Kidney (tissue), 22 donors: ENCODE measurements at regions of chr1 and their contacts with region 1.

Region 1: GRCh38 chr1:183915625-183916510 is 110.9 kb downstream of the RGL1 start:
- DNase-seq: peak; percentile 72 to 95 (median 76)
- H3K4me3 ChIP-seq: no peak overlapping the region
- H3K27ac ChIP-seq: no peak overlapping the region
- H3K4me1 ChIP-seq: no peaks in the 10 kb centered on the region
- H3K27me3 ChIP-seq: no peaks in the 10 kb centered on the region
- CTCF ChIP-seq: peak; percentile 88

Region 2: GRCh38 chr1:183655562-183656075 is 260.2 kb before region 1 on chr1:
- intact Hi-C with region 1: loop called (anchors 5 kb)
- DNase-seq: peak; percentile 82 to 94 (median 85)
- H3K4me3 ChIP-seq: no peak overlapping the region
- H3K27ac ChIP-seq: no peak overlapping the region
- H3K4me1 ChIP-seq: no peaks in the 10 kb centered on the region
- H3K27me3 ChIP-seq: no peaks in the 10 kb centered on the region
- CTCF ChIP-seq: peak; percentile 91

Region 3: DNA sequence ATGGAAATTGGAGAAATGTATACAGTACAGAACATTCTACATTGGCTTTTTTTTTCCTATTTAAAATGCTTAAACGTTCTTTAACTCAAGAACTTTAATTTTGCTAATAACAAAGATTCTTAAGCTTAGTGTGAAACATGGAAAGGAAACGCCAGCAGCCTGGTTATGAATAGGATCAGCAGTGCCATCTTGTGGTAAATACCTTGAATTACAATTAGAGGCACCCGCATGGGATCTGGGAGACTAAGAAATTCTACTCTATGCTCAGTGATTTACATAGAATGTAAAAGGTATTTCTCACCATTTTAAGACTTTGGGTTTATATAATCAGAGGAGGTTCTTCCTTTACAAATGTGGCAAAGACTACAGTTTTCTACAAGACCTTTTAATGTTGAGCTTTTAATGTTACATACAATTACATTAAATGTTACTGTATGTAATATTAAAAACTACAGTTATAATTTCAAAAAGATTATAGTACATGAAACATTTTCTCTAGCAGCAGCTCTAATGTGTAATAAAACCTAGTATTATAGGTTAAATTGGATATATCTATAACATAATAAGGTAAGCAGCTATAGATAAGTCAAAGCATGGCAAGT is 230.7 kb before region 1 on chr1:
- intact Hi-C with region 1: loop called (anchors 10 kb)
- DNase-seq: peak in 2 of 5 donors; percentile 11 to 19
- H3K4me3 ChIP-seq: no peak overlapping the region
- H3K27ac ChIP-seq: no peak overlapping the region
- H3K4me1 ChIP-seq: no peaks in the 10 kb centered on the region
- H3K27me3 ChIP-seq: no peaks in the 10 kb centered on the region
- CTCF ChIP-seq: peak; percentile 64

Region 4: DNA sequence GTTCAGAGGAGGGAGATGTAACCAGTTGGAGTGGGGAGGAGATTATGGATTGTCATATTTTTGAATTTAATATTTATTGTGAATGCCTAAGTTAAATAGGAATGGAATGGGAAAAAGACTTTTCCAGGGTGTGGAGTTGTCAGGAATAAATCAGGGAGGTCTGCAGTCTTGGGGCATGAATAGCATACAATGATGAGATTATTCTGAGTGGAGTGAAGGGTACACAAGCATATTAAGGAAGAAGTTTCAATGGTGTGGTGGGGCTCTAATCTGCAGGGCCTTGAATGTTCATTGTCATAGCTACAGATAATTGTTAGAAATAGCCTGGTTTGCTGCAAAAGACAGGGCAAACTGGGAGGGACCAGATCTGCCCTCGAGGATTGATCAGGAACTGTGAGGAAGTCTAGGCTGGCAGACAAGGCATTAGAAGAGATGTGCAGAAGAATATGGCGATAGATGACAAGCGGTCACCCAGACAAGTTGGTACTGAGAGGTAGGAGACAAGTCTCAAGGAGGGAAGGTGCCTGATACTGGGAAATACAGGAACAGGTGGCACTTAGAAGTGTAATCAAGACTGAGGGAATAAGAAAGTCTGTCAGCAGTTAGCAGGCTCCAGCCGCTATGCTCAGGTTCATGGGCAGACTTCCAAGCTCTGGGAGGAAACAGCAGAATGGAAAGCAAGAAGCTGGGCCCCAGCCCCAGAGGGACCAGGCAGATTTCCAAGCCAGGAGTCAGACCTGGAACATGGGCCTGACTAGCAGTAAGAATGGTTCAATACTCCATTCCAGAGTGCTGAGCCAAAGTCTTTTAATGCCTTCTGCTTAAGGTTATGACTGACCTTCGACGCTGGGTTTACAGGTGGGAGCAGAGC is 131.9 kb before region 1 on chr1:
- intact Hi-C with region 1: no loop called
- DNase-seq: peak in 3 of 5 donors; percentile 41 to 84 (median 67)
- H3K4me3 ChIP-seq: no peak overlapping the region
- H3K27ac ChIP-seq: no peak overlapping the region
- H3K4me1 ChIP-seq: no peaks in the 10 kb centered on the region
- H3K27me3 ChIP-seq: no peaks in the 10 kb centered on the region
- CTCF ChIP-seq: no peak

Region 5: DNA sequence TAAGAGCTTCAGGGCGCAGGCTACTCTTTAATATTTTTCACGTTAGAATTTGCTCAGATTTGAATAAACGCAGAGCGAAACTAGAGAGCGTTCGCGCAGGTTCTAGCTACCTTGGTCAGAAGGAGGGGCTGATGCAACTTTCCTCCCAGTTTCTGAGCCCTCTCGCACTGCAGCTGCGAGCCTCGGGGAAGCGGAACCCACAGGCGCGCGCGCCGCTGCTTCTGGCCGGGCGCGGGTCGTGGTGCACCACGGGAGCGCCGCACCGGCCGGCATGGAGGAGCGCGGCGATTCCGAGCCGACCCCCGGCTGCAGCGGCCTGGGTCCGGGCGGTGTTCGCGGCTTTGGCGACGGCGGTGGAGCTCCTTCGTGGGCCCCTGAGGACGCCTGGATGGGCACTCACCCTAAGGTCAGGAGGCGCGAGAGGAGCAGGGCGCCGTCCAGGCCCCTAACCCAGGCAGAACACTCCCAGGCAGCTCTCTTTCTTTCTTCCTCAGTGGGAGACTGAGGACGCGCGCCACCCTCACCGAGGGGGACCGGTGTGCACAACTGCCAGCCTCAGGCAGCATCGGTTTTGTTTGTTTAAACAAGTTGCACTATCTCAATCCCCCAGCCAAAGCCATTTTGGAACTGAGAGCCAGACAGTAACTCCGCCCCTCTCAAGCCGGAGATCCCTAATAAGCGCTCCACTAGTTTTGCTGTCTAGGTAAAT is 135.8 kb after region 1 on chr1 and contains the start of gene TSEN15:
- intact Hi-C with region 1: no loop called
- DNase-seq: peak; percentile 86 to 93 (median 91)
- H3K4me3 ChIP-seq: peak within 1 kb of the TSS; percentile 76 to 95 (median 86)
- H3K27ac ChIP-seq: peak within 1 kb of the TSS; percentile 65 to 80
- H3K4me1 ChIP-seq: peaks cover 4 to 14% (median 7%) of the 10 kb centered on the region in 3 donors
- H3K27me3 ChIP-seq: no peaks in the 10 kb centered on the region
- CTCF ChIP-seq: peak; percentile 9
- total RNA-seq, gene TSEN15: 25.6 TPM